ENCODE measurements at regions of chr10 and their contacts with region 1.

Region 1: GRCh38 chr10:110765188-110765990 is 106.3 kb upstream of the PDCD4 start:
- DNase-seq: no peak

Region 2: DNA sequence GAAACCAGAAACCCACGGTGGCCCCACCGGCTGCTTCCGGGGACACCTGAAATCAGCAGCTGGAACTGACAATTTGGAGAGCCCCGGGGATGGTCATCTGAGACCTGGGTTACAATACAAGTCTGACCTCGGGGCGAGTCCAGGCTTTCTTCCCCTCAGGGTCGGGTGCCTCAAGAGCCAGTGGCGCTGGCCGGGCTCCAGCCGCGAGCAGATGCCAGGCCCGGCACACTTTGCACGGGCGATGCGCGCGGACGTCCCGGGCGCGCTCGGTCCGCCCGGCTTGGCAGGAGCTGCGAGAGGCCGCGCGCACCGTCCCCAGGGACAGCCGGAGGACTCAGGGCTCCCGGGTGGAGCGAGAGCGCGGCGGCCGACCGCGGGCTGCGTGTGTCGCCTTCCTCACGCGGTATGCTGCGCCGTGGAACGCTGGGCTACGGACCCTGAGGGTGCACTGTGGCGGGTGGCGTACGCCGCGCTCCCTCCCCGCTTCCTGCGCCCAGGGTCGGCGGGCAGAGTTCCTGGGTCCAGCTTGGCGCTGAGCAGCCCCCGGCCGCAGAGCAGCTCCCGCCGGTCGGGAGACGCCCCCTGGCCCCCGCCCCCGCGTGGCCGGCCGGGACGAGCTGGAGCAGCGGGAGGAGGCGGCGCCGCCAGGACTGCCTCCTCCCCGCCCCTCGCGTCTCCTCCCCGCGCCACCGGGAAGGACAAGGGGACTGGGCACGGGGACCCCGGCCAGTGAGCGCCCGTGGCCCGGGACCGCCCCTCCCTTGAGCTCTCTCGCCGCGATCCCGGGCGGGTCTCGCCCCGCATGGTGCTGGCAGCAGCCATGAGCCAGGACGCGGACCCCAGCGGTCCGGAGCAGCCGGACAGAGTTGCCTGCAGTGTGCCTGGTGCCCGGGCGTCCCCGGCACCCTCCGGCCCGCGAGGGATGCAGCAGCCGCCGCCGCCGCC is 121.5 kb before region 1 on chr10 and contains the start of gene RBM20:
- intact Hi-C with region 1: loop called (anchors 10 kb)
- DNase-seq: peak; percentile 88
- total RNA-seq, gene RBM20: 105 TPM

Region 3: GRCh38 chr10:110681023-110681681 is 84.2 kb before region 1 on chr10:
- intact Hi-C with region 1: loop called (anchors 1 kb)
- DNase-seq: no peak

Region 4: DNA sequence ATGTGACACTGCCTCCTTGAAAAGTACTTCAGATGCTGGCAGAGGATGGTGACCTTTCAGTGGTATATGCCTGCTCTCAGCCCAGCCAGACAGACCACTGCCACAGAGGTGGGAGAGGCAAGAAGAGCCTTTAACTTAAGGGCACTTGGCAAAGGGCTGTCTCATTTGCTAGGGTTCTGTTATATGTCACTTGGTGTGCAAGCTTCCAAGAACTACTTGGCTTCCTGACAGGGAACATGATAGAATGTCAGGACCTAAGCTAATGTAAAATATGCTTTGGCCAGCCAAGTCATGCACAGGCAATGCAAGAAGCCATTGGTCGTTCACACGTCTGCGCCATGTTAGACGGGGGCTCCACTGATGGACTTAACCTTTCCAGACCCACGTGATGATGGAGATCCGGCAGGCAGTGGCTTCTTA is 66.6 kb before region 1 on chr10:
- intact Hi-C with region 1: loop called (anchors 2 kb)
- DNase-seq: no peak

Region 5: DNA sequence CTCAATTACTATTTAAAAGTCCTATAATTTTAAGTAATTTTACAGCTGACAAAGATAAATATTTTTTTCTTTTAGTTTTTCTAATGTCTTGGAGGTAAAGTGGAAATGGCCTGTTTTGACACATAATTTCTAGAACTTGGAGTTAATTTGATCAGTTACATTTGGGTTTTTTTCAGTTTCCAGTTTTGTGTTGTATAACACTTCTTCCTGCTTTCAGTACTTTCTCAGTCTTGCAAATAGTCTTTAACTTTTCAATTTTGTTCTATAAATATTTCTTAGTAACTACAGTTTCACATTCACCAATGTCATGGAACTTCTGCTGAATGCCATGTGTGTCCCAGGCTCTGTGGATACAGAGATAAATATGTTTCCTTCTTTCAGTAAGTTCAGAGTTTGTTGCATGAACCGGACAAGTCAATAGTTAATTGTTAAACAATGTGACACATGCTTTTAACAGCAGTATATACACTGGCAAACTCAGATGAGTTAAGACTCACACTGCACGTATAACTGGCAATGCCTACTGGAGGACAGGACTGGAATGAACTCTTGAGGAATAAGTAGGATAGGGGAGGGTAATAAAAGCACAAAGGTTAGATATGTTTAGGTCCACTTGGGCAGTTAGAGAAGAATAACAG is 158.6 kb after region 1 on chr10:
- intact Hi-C with region 1: no loop called
- DNase-seq: no peak